A549 (cell line): ENCODE measurements at regions of chr4 and their contacts with region 1.

Region 1: DNA sequence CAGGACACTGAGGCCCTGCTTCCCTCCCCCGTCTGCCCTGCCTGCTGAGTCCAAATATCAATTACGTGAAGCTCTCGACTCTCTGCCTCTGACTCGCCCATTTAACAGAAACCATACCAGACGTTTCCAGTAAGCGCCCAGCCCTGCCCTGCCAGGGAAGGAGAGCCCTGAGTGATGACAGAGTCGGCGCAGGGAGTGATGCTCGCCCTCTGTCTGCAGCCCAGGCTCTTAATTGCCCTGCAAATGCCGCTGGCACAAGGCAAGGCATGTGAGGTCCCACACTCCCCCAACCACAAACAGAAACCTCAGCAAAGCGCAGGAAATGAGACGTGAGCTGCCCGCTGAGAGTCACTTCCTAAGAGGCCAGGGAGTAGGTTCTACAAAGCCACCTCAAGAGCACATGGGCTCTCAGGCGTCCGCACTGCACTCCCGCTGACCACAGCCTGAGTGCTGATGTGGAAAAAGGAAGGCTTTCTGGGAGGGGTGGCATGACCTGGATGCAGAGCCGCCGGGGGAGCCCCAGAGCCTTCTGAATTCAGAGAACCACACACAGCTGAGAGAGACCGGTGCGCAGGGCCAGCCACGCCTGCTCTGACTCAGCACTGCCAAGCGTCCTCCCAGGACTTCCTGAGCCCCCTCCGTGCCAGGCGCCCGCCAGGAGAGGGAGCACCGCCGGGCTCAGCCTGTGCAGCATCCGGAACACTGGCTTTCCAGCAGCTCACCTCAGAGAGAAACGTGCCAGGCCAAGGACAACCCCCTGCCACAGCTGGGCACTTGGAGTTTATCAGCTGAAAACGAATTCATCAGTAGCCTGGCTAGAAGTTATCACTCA is 5.3 kb downstream of the ZFYVE28 start:
- DNase-seq: peak; percentile 84 to 91
- ATAC-seq: peak; percentile 91 to 96
- H3K4me3 ChIP-seq: peak overlapping the region; percentile 42
- H3K27ac ChIP-seq: peak overlapping the region; percentile 87 to 91
- H3K4me1 ChIP-seq: peaks cover 24% of the 10 kb centered on the region
- CTCF ChIP-seq: peak; percentile 39
- EP300 ChIP-seq: no peak
- POLR2A ChIP-seq: peak; percentile 40
- RAD21 ChIP-seq: peak; percentile 24 to 36; a peak in 3 of 5 replicates

Region 2: GRCh38 chr4:2262143-2262943 is 150.8 kb before region 1 on chr4:
- CTCF ChIA-PET with region 1: no interaction called
- POLR2A ChIA-PET with region 1: interaction called, 10 read pairs
- DNase-seq: peak; percentile 92 to 99
- ATAC-seq: peak; percentile 92 to 96
- H3K4me3 ChIP-seq: peak overlapping the region; percentile 81
- H3K27ac ChIP-seq: peak overlapping the region; percentile 98 to 99
- H3K4me1 ChIP-seq: peaks cover 6% of the 10 kb centered on the region; the same call in 1 of the 3 replicates
- CTCF ChIP-seq: no peak
- EP300 ChIP-seq: no peak
- POLR2A ChIP-seq: peak; percentile 88
- RAD21 ChIP-seq: no peak

Region 3: DNA sequence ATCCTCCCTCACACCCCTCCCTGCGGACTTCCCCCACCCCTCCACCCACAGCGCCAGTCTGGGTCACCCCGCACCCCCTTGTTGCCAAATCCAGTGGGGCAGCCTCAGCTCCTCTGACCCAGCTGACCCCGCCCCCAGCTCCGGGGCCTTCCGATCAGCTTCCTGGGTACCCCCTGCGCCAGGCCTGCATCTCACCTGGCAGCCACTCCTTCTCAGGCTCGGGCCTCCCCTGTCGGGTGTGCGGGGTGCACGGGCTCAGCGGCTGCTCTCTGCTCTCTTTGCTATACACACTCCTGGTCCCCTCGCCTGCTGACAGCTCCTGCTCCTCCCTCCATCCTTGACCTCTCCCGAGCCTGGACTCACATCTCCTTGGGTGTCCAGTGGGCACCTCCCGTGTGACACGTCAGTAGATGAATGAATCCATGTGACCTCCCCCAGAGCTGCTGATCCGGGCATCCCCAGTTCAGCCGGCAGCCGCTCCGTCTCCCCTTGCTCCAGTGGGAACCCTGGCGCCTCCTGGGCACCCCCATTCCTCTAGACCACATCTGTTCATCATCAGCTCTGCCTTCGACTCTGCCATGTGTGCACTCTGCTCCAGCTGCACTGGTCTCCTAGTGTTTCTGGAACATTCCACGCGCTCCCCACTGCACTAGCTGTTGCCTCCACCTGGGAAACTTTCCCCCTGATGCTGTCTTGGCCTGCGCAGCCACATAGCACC is 15.6 kb after region 1 on chr4:
- CTCF ChIA-PET with region 1: interaction called, 13 read pairs
- POLR2A ChIA-PET with region 1: interaction called, 3 read pairs
- DNase-seq: no peak
- ATAC-seq: peak in 1 of 2 experiments; percentile 23; a peak in 3 of 6 replicates
- H3K4me3 ChIP-seq: no peak overlapping the region
- H3K27ac ChIP-seq: peak overlapping the region in 1 of 2 experiments; percentile 64; a peak in 4 of 6 replicates
- H3K4me1 ChIP-seq: peaks cover 8% of the 10 kb centered on the region
- CTCF ChIP-seq: no peak
- EP300 ChIP-seq: no peak
- POLR2A ChIP-seq: no peak
- RAD21 ChIP-seq: no peak

Region 4: DNA sequence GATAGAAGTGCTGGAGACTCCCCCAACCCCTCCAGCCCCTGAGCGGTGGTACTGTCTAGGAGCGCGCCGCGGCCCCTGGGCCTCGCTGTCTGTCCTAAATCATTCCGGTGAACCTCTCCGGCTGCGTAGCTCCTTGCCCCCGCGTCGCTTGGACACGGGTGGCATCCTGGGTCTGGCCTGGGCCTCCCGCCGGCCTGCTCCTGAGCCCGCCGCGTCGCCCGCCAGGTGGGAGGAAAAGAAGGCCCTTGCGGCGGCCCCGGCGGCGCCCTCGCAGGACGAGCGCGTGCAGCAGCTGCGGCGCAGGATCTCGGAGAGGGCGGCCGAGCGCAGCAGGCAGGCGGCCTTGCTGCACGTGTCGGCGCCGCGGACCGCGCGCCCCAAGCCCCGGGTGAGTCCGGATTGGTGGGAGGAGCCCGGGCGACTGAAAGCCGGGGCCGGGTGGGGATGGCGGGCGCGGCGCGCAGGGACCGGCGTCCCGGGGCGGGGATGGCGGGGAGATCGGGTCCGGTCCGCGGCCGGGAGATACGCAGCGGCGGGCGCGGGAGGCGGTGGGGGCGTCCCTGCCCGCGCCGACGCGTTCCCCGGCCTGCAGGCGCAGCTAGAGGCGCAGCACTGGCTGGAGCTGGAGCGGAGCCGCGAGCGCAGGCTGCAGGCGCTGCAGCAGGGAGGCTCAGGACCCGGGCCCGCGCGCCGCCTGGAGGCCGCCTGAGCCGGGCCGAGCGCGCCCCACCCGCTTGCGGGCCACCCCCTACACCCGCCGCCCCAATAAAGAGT is 49.3 kb after region 1 on chr4:
- CTCF ChIA-PET with region 1: interaction called, 34 read pairs
- POLR2A ChIA-PET with region 1: no interaction called
- DNase-seq: peak; percentile 62 to 65
- ATAC-seq: peak; percentile 96
- H3K4me3 ChIP-seq: peak overlapping the region; percentile 60
- H3K27ac ChIP-seq: peak overlapping the region; percentile 80 to 89
- H3K4me1 ChIP-seq: peaks cover 8% of the 10 kb centered on the region
- CTCF ChIP-seq: peak; percentile 49
- EP300 ChIP-seq: no peak
- POLR2A ChIP-seq: peak; percentile 37
- RAD21 ChIP-seq: peak; percentile 17 to 60; a peak in 4 of 5 replicates